GM10248 (cell line): ENCODE measurements at regions of chr2 and their contacts with region 1.

Region 1: GRCh38 chr2:185738679-185739472 is at the start of gene FSIP2:
- DNase-seq: peak; percentile 81
- CTCF ChIP-seq: peak; percentile 95

Region 2: GRCh38 chr2:185291035-185291647 is 447.7 kb before region 1 on chr2:
- CTCF ChIA-PET with region 1: interaction called, 27 read pairs
- POLR2A ChIA-PET with region 1: no interaction called
- DNase-seq: peak; percentile 6
- CTCF ChIP-seq: peak; percentile 53

Region 3: GRCh38 chr2:185628985-185629384 is 109.9 kb before region 1 on chr2:
- CTCF ChIA-PET with region 1: interaction called, 31 read pairs
- POLR2A ChIA-PET with region 1: no interaction called
- DNase-seq: no peak
- CTCF ChIP-seq: no peak

Region 4: GRCh38 chr2:185689906-185690539 is 48.9 kb before region 1 on chr2:
- CTCF ChIA-PET with region 1: interaction called, 10 read pairs
- POLR2A ChIA-PET with region 1: no interaction called
- DNase-seq: no peak
- CTCF ChIP-seq: no peak

Region 5: GRCh38 chr2:185780890-185781289 is 42.0 kb after region 1 on chr2:
- CTCF ChIA-PET with region 1: no interaction called
- POLR2A ChIA-PET with region 1: no interaction called
- DNase-seq: no peak
- CTCF ChIP-seq: no peak